Prostate gland (tissue), 2 donors: ENCODE measurements at regions of chr3 and their contacts with region 1.

Region 1: DNA sequence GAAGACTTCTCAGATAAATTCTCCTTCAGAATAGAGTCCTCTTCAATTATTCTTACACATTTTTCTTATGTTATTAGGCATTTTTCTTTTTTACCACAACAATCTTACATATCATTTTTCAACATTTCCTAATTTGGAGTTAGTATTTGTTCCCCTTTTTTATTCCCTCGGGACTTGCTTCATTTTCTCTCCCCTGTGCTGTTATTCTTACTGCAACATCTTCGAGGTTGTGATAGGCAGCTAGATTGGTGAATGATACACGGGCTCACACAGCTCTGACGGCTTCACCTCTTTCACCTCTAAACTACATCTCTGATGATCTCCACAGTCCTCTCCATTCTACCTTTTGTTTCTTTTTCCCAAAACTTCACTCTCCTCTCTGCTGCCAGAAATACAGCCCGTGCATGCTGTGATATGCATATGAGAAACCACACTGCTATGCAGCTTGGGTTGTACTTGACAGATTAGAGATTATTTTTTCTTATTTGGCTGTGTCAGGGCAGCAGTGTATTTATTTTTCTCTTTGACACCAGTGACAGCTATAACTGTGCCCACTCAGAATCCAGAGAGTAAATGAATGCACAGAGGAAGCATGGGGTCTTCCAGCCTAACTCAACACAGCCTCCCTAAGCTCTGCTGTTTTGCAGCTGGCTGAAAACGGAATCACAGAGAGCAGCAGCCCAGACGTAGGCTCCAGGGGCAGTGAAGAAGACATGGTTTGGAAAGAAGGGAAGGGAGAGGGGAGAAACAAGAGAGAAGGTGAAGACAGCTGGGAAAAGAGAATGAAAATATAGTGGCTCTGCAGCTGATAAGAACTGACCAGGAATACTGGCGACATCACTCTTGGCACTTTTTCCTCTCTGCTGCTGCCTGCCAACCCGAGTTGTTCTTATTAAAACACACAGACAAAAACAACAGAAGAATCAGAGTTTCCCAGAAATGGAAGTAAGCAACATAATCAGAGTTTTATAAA is 61.8 kb downstream of the SLC9A9 start:
- DNase-seq: peak; percentile 48
- H3K4me3 ChIP-seq: no peak overlapping the region
- H3K27ac ChIP-seq: peak overlapping the region; percentile 6 to 47
- H3K4me1 ChIP-seq: no peaks in the 10 kb centered on the region
- H3K27me3 ChIP-seq: no peaks in the 10 kb centered on the region
- CTCF ChIP-seq: no peak
- POLR2A ChIP-seq: no peak

Region 2: DNA sequence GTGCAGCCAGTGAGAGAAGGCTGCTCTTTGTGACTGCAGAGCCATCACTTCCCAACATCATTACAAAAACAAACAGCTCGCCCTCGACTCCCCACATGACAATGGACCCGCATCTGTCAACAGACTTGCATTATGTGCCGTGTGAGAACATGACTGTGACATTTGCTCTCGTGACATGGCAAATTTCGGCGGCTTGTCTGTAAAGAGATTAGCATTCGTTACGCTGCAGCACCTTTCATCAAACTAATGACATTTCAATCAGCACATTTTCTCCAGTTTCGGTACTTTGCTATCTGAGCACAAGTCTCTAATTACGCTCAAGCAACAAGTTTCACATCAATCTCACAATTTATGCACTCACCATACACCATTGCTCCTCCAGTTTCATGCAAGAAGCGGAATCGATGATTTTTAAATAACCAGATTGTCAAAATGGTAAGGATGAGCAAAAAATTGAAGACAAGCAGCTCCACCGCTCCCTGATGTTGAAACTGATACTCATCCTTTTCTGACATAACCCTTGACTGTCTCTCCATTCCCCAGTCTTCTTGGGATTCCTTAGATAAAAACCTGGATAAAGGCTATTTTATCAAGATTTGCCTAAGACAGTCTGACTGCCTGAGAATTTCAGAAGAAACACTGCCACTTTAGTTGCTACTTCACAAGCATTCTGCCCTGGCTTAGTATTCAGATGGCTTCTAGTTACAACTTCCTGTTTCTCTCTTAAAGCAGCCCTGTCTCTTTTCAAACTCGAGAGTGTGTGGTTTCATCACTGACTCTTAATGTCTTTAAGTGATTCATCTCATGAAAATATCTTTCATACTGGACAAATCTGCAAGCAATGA is 61.5 kb after region 1 on chr3 and contains the start of gene SLC9A9:
- intact Hi-C with region 1: loop called (anchors 10 kb)
- DNase-seq: peak; percentile 32
- H3K4me3 ChIP-seq: peak within 1 kb of the TSS; percentile 38 to 44
- H3K27ac ChIP-seq: peak within 1 kb of the TSS; percentile 61 to 62
- H3K4me1 ChIP-seq: no peaks in the 10 kb centered on the region
- H3K27me3 ChIP-seq: no peaks in the 10 kb centered on the region
- CTCF ChIP-seq: no peak
- POLR2A ChIP-seq: no peak
- total RNA-seq, gene SLC9A9: 23.6 to 31.0 TPM